RWPE1 (cell line): ENCODE measurements at regions of chr19 and their contacts with region 1.

Region 1: DNA sequence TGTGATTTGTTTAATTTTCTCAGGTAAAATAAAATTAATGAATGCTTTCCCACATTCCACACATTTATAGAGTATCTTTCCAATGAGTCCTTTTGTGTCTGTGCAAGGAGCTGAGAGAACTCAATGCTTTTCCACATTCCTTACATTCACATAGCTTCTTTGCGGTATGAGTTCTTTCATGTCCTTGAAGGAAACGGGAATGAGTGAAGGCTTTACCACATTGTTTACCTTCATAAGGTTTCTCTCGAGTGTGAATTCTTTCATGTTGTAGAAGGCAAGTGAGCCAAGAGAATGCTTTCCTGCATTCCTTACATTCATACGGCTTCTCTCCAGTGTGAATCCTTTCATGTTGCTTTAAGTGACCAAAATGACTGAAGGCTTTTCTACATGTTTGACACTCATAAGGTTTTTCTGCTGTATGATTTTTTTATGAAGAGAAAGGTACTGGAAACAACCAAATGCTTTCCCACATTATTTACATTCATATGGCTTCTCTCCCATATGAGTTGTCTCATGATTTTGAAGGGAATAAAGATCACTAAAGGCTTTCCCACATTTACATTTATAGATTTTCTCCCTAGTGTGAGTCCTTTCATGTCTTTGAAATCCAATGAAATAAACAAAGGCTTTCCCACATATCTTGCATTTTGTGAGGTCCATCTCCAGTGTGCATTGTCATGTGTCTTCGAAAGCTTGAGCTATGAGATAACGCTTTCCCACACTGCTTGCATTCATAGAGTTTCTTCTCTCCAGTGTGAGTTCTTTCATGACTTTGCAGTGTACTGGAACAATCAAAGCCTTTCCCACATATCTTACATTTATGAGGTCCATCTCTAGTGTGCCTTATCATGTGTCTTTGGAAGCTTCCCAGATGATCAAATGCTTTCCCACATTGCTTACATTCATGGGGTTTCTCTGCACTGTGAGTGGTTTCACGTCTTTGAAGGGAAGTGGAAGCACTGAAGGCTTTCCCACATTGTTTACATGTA is 14.6 kb upstream of the ZNF442 start:
- DNase-seq: no peak
- H3K27ac ChIP-seq: no peak overlapping the region
- CTCF ChIP-seq: no peak

Region 2: GRCh38 chr19:12064590-12065538 is 315.2 kb before region 1 on chr19 and contains the start of gene ZNF844:
- CTCF ChIA-PET with region 1: no interaction called
- POLR2A ChIA-PET with region 1: no interaction called
- DNase-seq: peak; percentile 94
- H3K27ac ChIP-seq: peak within 1 kb of the TSS; percentile 80
- CTCF ChIP-seq: no peak

Region 3: GRCh38 chr19:12265921-12266704 is 113.9 kb before region 1 on chr19:
- CTCF ChIA-PET with region 1: interaction called, 10 read pairs
- POLR2A ChIA-PET with region 1: no interaction called
- DNase-seq: no peak
- H3K27ac ChIP-seq: no peak overlapping the region
- CTCF ChIP-seq: no peak